ENCODE measurements at regions of chr10 and their contacts with region 1.

Region 1: DNA sequence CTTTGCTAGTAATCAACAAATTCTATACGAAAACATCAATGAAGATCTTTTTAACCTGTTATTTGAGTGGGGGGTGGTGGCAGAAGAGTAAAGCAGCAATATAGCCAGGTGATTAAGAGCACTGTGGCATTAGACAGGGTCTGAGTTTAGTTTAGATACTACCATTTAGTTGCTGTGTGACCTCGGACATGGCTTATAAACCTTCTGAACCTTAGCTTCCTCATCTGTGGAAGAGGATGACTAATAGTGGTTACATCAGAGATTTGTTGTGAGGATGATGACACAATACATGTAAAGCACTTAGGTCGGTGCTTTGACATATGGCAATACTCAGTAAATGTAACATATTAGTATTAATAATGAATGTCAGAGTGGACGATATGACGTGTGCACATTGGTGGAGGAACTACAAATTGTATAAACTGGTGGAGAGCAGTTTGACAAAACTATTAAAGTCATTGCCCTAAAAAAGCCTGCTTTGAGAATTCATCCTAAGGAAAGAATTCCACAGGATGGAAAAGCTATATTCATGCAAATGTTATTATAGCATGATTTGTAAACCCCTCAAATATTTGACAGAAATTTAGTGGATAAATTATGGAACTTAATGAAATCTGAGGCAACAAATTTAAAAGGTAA is 24.3 kb downstream of the SPAG6 start:
- DNase-seq: no peak
- ATAC-seq: peak; percentile 69
- H3K4me3 Mint-ChIP-seq: no peak overlapping the region
- H3K27ac Mint-ChIP-seq: no peak overlapping the region
- H3K4me1 Mint-ChIP-seq: peaks cover 37% of the 10 kb centered on the region
- H3K27me3 Mint-ChIP-seq: peaks cover 2% of the 10 kb centered on the region

Region 2: GRCh38 chr10:22386503-22386902 is 16.9 kb after region 1 on chr10:
- CTCF ChIA-PET with region 1: interaction called, 10 read pairs
- POLR2A ChIA-PET with region 1: no interaction called
- intact Hi-C with region 1: no loop called
- DNase-seq: no peak
- ATAC-seq: no peak
- H3K4me3 Mint-ChIP-seq: no peak overlapping the region
- H3K27ac Mint-ChIP-seq: no peak overlapping the region
- H3K4me1 Mint-ChIP-seq: no peaks in the 10 kb centered on the region
- H3K27me3 Mint-ChIP-seq: peaks cover 3% of the 10 kb centered on the region

Measured in activated CD4-positive, alpha-beta T cell treated with anti-CD3 and anti-CD28 coated beads for 36 hours (primary cell).